ENCODE measurements at regions of chr1 and their contacts with region 1.

Region 1: GRCh38 chr1:42576935-42577334 is 81.3 kb upstream of the PPIH start:
- DNase-seq: no peak
- H3K4me3 ChIP-seq: no peak overlapping the region
- H3K27ac ChIP-seq: no peak overlapping the region
- H3K4me1 ChIP-seq: no peaks in the 10 kb centered on the region
- H3K27me3 ChIP-seq: no peaks in the 10 kb centered on the region
- CTCF ChIP-seq: no peak

Region 2: DNA sequence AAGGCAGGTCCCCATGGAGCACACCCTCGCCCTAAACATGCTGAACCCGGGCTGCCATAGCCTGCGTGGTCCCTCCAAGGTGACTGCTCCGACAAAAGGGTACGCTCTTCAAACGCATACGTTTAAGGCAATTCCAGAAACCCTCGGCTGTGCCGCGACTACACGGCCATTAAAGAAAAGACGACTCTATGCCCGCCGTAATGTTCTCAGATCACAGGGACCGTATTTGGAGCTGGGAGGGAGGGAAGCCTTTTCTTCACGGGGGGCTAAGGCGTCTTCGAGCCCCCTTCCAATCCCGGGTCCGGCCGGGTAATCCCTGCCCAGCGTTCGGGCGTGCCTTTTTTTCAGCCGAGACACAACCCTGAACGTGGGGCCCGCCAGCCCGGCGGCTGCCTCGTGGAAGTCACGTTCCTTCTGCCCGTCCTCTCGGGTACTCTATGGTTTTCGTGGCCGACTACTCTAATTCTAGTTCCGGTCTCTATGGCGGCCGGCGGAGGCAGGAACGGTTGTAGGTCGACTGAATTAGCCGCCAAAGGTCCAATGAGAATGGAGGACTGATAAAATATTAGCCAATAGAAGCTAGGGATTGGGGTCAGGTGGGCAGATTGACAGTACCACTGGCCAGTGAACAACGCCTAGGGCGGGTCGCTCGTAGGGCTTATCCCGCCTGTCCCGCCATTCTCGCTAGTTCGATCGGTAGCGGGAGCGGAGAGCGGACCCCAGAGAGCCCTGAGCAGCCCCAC is 105.0 kb after region 1 on chr1 and contains the start of gene YBX1:
- CTCF ChIA-PET with region 1: no interaction called
- POLR2A ChIA-PET with region 1: no interaction called
- intact Hi-C with region 1: loop called (anchors 5 kb)
- DNase-seq: peak; percentile 96 to 98
- H3K4me3 ChIP-seq: peak within 1 kb of the TSS; percentile 93
- H3K27ac ChIP-seq: peak within 1 kb of the TSS; percentile 79
- H3K4me1 ChIP-seq: peaks cover 41% of the 10 kb centered on the region
- H3K27me3 ChIP-seq: no peaks in the 10 kb centered on the region
- CTCF ChIP-seq: no peak
- total RNA-seq, gene YBX1: 656 and 1,130 TPM in 2 replicates

Region 3: DNA sequence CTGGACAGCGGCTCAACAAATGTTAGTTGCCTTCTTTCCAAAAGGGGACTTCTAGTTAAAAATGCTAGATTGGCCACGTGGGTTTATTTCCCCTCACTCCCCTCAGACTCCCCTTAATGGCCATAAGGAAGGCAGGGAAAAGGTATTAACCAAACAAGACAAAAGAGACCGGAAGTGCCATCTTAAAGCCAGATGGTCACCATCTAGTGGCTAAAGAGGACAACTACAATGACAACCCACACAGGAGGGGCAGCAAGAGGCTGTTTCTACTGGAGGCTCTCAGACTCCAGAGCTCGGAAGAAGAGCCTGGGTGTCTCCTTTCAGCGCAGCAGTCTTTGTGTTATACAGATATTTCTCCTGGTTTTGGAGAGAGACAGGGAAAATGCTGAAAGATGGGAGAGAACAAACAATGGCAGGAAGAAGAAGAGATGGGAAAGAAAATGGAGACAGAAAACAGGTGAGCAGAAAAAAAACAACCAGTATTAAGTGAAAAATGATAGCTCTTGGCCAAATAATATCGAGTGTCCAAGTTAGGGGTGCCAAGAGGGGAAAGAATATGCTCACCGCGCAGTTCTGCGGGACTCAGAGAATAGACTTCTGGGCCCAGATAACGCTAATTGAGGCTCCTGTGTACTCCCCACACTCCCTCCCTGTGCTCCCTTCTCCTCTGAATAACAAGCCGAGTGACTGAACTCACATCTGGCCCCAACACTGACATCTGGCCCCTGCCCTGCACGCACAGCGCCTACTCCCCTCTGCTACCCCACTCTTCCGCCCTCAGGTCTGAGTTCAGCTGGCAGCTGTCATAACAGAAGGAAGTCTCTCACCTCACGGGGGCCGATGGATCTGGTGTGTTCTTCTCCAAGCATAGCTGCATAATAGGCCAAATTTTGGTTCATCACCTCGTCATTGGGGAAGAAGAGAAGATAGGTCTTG is 180.3 kb after region 1 on chr1:
- CTCF ChIA-PET with region 1: no interaction called
- POLR2A ChIA-PET with region 1: no interaction called
- intact Hi-C with region 1: loop called (anchors 5 kb)
- DNase-seq: peak in 1 of 2 experiments; percentile 34
- H3K4me3 ChIP-seq: no peak overlapping the region
- H3K27ac ChIP-seq: no peak overlapping the region
- H3K4me1 ChIP-seq: no peaks in the 10 kb centered on the region
- H3K27me3 ChIP-seq: no peaks in the 10 kb centered on the region
- CTCF ChIP-seq: peak; percentile 83

Measured in PC-9 (cell line).